ENCODE measurements at regions of chr7 and their contacts with region 1.

Region 1: GRCh38 chr7:101390901-101391301 is 28.2 kb downstream of the COL26A1 start:
- DNase-seq: peak; percentile 41
- ATAC-seq: peak; percentile 96
- H3K4me3 Mint-ChIP-seq: peak overlapping the region; percentile 67
- H3K27ac Mint-ChIP-seq: peak overlapping the region; percentile 77
- H3K4me1 Mint-ChIP-seq: peaks cover 43% of the 10 kb centered on the region
- H3K27me3 Mint-ChIP-seq: peaks cover 5% of the 10 kb centered on the region
- CTCF ChIP-seq: no peak

Region 2: GRCh38 chr7:101410743-101411507 is 20.0 kb after region 1 on chr7:
- CTCF ChIA-PET with region 1: interaction called, 8 read pairs
- POLR2A ChIA-PET with region 1: interaction called, 4 read pairs
- intact Hi-C with region 1: loop called (anchors 1 kb)
- DNase-seq: peak; percentile 30
- ATAC-seq: peak; percentile 75
- H3K4me3 Mint-ChIP-seq: peak overlapping the region; percentile 55
- H3K27ac Mint-ChIP-seq: no peak overlapping the region
- H3K4me1 Mint-ChIP-seq: peaks cover 13% of the 10 kb centered on the region
- H3K27me3 Mint-ChIP-seq: peaks cover 26% of the 10 kb centered on the region
- CTCF ChIP-seq: no peak

Region 3: GRCh38 chr7:101465576-101466196 is 74.8 kb after region 1 on chr7:
- CTCF ChIA-PET with region 1: no interaction called
- POLR2A ChIA-PET with region 1: no interaction called
- intact Hi-C with region 1: no loop called
- DNase-seq: no peak
- ATAC-seq: no peak
- H3K4me3 Mint-ChIP-seq: peak overlapping the region; percentile 41
- H3K27ac Mint-ChIP-seq: no peak overlapping the region
- H3K4me1 Mint-ChIP-seq: peaks cover 10% of the 10 kb centered on the region
- H3K27me3 Mint-ChIP-seq: peaks cover 1% of the 10 kb centered on the region
- CTCF ChIP-seq: no peak